Prostate gland (tissue), 2 donors: ENCODE measurements at regions of chr7 and their contacts with region 1.

Region 1: GRCh38 chr7:1537535-1538412 is 7.3 kb downstream of the MAFK start:
- DNase-seq: no peak
- H3K4me3 ChIP-seq: peak overlapping the region; percentile 29 to 41
- H3K27ac ChIP-seq: peak overlapping the region; percentile 91 to 97
- H3K4me1 ChIP-seq: peaks cover 33% of the 10 kb centered on the region
- H3K27me3 ChIP-seq: no peaks in the 10 kb centered on the region
- CTCF ChIP-seq: no peak
- POLR2A ChIP-seq: no peak

Region 2: DNA sequence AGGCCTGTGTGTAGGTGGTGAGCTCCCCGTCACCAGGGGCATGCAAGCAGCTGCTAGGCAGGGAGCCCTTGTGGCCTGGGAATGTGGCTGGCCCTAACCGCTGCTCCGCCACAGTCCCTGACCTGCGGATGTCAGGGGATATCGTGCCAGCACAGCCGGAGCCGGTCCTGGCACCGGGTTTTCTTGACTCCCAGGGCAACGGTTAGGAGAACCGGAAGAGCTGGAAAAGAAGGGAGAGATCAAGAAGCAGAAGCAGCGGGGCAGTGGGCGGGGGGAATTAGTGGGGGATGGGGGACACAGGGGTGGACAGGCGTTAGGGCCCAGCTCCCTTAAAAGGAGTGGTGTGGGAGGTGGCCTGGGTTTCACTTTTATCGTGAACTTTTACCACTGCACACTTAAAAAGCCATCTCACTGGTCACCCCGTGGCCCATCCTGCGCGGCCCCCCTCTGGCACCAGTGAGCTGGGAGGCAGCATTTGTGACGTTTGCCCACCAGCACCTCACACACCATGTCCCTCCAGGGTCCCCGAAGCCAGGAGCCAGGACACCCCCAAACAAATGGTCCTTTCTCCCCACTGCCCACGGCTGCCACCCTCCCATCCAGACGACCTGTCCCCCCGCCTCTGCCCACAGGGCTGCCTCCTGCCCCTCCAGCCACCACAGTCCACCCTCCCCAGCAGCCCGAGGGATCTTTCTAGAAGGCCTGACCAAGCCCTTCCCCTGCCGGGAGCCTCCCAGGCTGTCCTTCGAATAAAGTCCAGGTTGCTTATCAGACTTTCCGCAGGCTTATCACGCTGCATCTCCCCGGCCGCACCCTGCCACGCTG is 76.7 kb before region 1 on chr7:
- intact Hi-C with region 1: loop called (anchors 5 kb)
- DNase-seq: peak; percentile 29
- H3K4me3 ChIP-seq: no peak overlapping the region
- H3K27ac ChIP-seq: peak overlapping the region; percentile 72 to 86
- H3K4me1 ChIP-seq: peaks cover 13% of the 10 kb centered on the region
- H3K27me3 ChIP-seq: no peaks in the 10 kb centered on the region
- CTCF ChIP-seq: no peak
- POLR2A ChIP-seq: no peak

Region 3: GRCh38 chr7:2632733-2633537 is 1095.2 kb after region 1 on chr7:
- intact Hi-C with region 1: loop called (anchors 5 kb)
- DNase-seq: peak; percentile 37
- H3K4me3 ChIP-seq: peak overlapping the region; percentile 68 to 89
- H3K27ac ChIP-seq: peak overlapping the region; percentile 74 to 81
- H3K4me1 ChIP-seq: peaks cover 17% of the 10 kb centered on the region
- H3K27me3 ChIP-seq: no peaks in the 10 kb centered on the region
- CTCF ChIP-seq: no peak
- POLR2A ChIP-seq: peak; percentile 45